CD8-positive, alpha-beta T cell (primary cell): ENCODE measurements at regions of chr12 and their contacts with region 1.

Region 1: DNA sequence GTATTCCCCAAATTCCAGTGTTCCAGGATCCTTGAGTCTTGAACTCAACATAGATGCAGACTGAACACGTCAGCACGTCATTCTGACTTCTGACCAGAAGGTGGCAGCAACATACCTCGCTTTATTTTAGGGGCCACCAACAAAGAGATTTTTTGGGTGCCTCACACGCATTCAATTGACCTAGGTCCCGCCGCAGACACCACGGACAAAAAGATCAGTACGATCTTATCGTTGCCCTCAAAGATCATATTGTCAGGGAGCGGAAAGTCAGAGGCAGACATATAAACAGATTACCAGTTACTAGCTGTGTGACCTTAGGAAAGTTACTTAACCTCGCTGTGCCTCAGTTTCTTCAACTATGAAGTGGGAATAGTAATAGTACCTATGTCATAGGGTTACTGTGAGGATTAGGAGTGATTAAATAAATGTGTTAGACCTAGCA is 6.5 kb upstream of the PRPH start:
- DNase-seq: peak; percentile 52 to 82 (median 70)
- ATAC-seq: peak; percentile 89
- H3K4me3 ChIP-seq: no peak overlapping the region
- H3K4me3 Mint-ChIP-seq: no peak overlapping the region
- H3K27ac ChIP-seq: no peak overlapping the region
- H3K27ac Mint-ChIP-seq: no peak overlapping the region
- H3K4me1 ChIP-seq: no peaks in the 10 kb centered on the region
- H3K4me1 Mint-ChIP-seq: no peaks in the 10 kb centered on the region
- H3K27me3 ChIP-seq: peaks cover 0 to 4% of the 10 kb centered on the region in 2 experiments
- H3K27me3 Mint-ChIP-seq: peaks cover 29% of the 10 kb centered on the region
- CTCF ChIP-seq: peak; percentile 91

Region 2: GRCh38 chr12:49170924-49171323 is 117.5 kb before region 1 on chr12:
- CTCF ChIA-PET with region 1: no interaction called
- POLR2A ChIA-PET with region 1: no interaction called
- intact Hi-C with region 1: no loop called
- DNase-seq: no peak
- ATAC-seq: no peak
- H3K4me3 ChIP-seq: no peak overlapping the region
- H3K4me3 Mint-ChIP-seq: no peak overlapping the region
- H3K27ac ChIP-seq: no peak overlapping the region
- H3K27ac Mint-ChIP-seq: no peak overlapping the region
- H3K4me1 ChIP-seq: no peaks in the 10 kb centered on the region
- H3K4me1 Mint-ChIP-seq: no peaks in the 10 kb centered on the region
- H3K27me3 ChIP-seq: no peaks in the 10 kb centered on the region
- H3K27me3 Mint-ChIP-seq: no peaks in the 10 kb centered on the region
- CTCF ChIP-seq: no peak

Region 3: DNA sequence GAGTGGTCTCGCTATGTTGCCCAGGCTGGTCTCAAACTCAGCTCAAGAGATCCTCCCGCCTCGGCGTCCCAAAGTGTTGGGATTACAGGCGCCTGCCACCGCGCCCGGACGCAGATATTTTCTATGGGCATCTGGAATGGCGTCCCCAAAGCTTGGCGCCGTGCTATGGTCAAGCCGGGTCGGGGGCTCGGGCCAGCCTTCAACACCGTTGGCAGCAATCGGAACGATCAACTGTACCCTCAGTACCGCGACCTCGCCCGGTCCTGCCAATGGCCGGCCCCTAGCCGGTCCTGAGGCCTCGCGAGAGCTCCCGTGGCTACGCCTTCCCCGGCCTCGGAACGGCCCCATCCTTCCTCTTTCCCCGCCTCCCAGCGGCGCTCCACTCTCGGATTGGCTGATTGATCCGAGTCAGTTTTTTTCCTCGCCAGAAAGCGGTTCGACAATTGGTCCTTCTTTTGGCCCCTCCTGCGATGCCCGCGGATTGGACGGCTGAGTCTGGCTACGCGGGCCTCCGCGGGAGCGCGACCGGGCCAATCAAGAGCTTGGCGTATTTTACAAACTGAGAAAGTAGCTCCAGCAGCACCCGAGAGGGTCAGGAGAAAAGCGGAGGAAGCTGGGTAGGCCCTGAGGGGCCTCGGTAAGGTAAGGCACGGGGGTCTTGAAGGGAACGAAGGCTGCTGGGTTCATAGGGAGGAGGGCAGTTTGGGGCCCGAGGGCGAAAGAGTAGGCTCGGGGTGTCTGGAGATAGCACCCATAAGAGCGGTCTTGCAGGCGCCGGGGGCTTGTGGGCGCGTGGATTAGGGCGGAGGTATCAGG is 34.5 kb after region 1 on chr12 and contains the start of gene TROAP:
- CTCF ChIA-PET with region 1: interaction called, 14 read pairs
- POLR2A ChIA-PET with region 1: no interaction called
- intact Hi-C with region 1: no loop called
- DNase-seq: peak; percentile 93 to 99 (median 96)
- ATAC-seq: peak; percentile 96
- H3K4me3 ChIP-seq: peak within 1 kb of the TSS; percentile 71 to 83
- H3K4me3 Mint-ChIP-seq: peak within 1 kb of the TSS; percentile 89
- H3K27ac ChIP-seq: peak within 1 kb of the TSS; percentile 48 to 60
- H3K27ac Mint-ChIP-seq: peak within 1 kb of the TSS; percentile 81
- H3K4me1 ChIP-seq: peaks cover 12% of the 10 kb centered on the region
- H3K4me1 Mint-ChIP-seq: peaks cover 20% of the 10 kb centered on the region
- H3K27me3 ChIP-seq: no peaks in the 10 kb centered on the region
- H3K27me3 Mint-ChIP-seq: no peaks in the 10 kb centered on the region
- CTCF ChIP-seq: no peak
- total RNA-seq, gene TROAP: 0.49 to 0.72 TPM

Region 4: DNA sequence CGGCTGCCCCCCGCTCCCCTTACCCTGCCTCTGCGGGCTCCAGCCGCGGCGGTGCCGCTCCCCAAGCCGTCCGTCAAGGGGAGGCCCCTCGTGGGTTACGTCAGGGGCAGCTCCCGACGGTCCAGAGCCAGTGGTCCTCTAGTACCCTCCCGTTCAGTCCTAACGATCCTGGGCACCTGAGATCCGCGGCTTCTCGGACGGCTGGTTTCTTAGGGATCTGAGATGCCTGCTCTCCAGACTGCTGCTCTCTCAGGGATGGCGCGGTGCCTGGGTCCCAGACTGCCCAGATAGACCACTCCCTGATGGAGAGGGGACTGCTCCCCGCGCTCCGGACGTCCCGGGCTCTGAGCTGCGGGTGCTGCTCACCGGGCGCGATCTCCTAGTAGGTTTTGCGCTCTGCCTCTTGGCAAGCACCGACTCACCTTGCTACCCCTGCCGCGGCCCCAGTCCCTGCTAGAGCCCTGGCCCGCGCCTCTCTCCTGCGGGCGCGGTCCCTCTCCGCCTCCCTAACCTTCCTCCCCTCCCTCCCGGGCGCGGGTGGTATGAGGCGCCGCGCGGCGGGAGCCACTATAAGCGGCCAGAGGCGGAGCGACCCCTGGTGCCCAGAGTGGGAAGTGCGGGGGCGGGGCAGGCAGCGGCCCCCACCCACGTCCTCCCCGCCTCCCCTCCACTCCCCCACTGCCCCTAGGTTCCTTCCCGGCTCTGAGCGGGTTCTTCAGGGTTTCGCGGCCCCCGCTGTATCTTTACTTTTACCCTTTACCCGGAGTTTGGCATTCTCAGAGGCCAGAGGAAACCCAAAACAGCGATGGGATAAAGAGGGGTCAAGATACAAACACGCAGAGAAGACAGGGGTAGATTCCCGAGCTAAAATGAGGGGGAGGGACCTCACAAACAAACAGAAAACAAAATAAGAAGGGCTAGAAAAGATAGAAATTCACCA is 48.5 kb after region 1 on chr12 and contains the start of gene C1QL4:
- CTCF ChIA-PET with region 1: interaction called, 117 read pairs
- POLR2A ChIA-PET with region 1: no interaction called
- intact Hi-C with region 1: loop called (anchors 1 kb)
- DNase-seq: peak; percentile 79 to 94 (median 89)
- ATAC-seq: peak; percentile 97
- H3K4me3 ChIP-seq: peak within 1 kb of the TSS; percentile 47 to 51
- H3K4me3 Mint-ChIP-seq: peak within 1 kb of the TSS; percentile 75
- H3K27ac ChIP-seq: no peak within 1 kb of the TSS
- H3K27ac Mint-ChIP-seq: no peak within 1 kb of the TSS
- H3K4me1 ChIP-seq: peaks cover 8% of the 10 kb centered on the region
- H3K4me1 Mint-ChIP-seq: peaks cover 26% of the 10 kb centered on the region
- H3K27me3 ChIP-seq: peaks cover 18 to 36% of the 10 kb centered on the region in 2 experiments
- H3K27me3 Mint-ChIP-seq: peaks cover 51% of the 10 kb centered on the region
- CTCF ChIP-seq: peak; percentile 91
- total RNA-seq, gene C1QL4: not detected

Region 5: DNA sequence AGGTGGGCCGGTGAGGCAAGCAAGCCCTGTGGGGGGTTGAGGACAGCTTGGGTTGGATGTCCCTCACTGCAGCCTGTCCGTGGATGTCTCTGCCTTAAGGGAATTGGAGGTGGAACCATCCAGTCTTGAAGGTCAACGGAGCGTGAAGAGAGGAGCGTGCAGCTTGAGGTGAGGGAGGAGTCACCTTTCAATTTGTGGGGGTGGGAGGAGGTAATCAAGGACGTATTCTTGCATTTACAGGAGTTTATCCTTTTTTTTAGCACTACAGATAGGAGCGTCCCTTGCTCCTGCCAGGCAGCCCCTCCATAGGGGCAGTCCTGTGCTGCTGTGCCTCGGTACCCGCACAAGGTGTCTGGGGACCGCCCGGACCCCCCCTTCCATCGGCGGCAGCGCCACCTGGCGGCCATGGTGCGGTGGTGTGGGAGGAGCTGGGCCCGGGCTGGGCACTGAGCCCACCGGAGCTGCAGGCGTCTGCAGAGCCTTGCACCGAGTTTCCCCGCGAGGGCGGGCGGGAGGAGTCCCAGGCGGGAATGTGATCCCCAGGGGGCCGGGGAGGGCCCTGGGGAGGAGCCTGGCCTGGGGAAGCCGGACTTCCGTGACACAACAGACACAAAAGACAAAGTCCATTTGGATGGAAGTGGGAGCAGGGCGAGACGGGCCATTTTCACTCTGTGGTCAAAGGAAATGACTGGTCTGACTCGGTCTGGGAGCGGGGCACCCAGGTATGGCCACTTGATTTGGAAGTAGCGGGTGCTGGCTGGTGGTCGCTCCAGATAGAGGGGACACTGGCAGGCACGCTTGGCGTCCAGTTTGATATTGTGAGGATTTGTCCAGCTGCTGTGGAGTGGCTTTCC is 59.2 kb after region 1 on chr12:
- CTCF ChIA-PET with region 1: interaction called, 118 read pairs
- POLR2A ChIA-PET with region 1: interaction called, 3 read pairs
- intact Hi-C with region 1: loop called (anchors 1 kb)
- DNase-seq: peak; percentile 68 to 91 (median 81)
- ATAC-seq: peak; percentile 78
- H3K4me3 ChIP-seq: peak overlapping the region; percentile 47 to 54
- H3K4me3 Mint-ChIP-seq: peak overlapping the region; percentile 79
- H3K27ac ChIP-seq: no peak overlapping the region
- H3K27ac Mint-ChIP-seq: no peak overlapping the region
- H3K4me1 ChIP-seq: peaks cover 45% of the 10 kb centered on the region
- H3K4me1 Mint-ChIP-seq: peaks cover 40% of the 10 kb centered on the region
- H3K27me3 ChIP-seq: peaks cover 33 to 45% of the 10 kb centered on the region in 2 experiments
- H3K27me3 Mint-ChIP-seq: peaks cover 57% of the 10 kb centered on the region
- CTCF ChIP-seq: peak; percentile 97

Region 6: GRCh38 chr12:49580572-49581535 is 292.4 kb after region 1 on chr12:
- CTCF ChIA-PET with region 1: no interaction called
- POLR2A ChIA-PET with region 1: no interaction called
- intact Hi-C with region 1: loop called in 1 of 2 experiments (anchors 1 kb)
- DNase-seq: peak in 8 of 9 experiments; percentile 43 to 69 (median 61)
- ATAC-seq: peak; percentile 86
- H3K4me3 ChIP-seq: no peak overlapping the region
- H3K4me3 Mint-ChIP-seq: no peak overlapping the region
- H3K27ac ChIP-seq: no peak overlapping the region
- H3K27ac Mint-ChIP-seq: no peak overlapping the region
- H3K4me1 ChIP-seq: no peaks in the 10 kb centered on the region
- H3K4me1 Mint-ChIP-seq: peaks cover 11% of the 10 kb centered on the region
- H3K27me3 ChIP-seq: no peaks in the 10 kb centered on the region
- H3K27me3 Mint-ChIP-seq: no peaks in the 10 kb centered on the region
- CTCF ChIP-seq: peak; percentile 69